Activated T-helper 1 cell treated with anti-CD3 and anti-CD28 coated beads, Interleukin-12 subunit alpha, Interleukin-12 subunit beta, Interleukin-2, Interleukin-4 antibody, amounts not matched to agents 30 ng/mL and 10 ng/mL and 1 ng/mL, durations not matched to agents 14 hours and 24 hours and 36 hours (primary cell): ENCODE measurements at regions of chr1 and their contacts with region 1.

Region 1: DNA sequence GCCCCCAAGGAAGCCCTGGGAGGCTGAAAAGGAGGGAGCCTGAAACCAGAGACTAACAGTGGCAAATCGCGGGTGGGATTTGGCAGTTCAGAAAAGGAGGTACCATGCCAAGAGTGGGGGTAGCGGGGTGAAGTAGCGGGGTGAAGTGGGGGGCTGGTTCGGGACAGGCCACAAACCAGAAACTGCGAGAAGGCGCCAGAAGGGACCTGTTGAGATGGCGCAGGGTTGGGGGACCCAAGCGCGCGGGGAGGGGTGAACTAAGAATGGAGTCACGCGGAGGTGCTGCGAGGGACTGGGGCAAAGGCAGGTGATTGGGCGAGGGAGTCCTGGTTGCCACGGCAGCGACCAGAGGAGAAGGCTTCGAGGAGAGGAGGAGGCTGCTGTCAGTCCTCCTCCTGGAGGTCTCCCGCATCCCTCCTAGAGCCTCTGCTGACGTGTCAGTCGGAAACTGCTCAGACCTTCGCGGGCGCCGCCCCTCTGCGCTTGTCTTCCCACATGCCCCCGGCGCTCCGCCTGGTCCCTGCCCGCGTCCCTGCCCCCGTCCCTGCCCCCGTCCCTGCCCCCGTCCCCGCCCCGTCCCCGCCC is 438 bp upstream of the MIA3 start:
- DNase-seq: peak; percentile 86
- H3K4me3 Mint-ChIP-seq: peak overlapping the region; percentile 82
- H3K27ac Mint-ChIP-seq: peak overlapping the region; percentile 92
- H3K4me1 Mint-ChIP-seq: peaks cover 34% of the 10 kb centered on the region
- H3K27me3 Mint-ChIP-seq: peaks cover 26% of the 10 kb centered on the region

Region 2: DNA sequence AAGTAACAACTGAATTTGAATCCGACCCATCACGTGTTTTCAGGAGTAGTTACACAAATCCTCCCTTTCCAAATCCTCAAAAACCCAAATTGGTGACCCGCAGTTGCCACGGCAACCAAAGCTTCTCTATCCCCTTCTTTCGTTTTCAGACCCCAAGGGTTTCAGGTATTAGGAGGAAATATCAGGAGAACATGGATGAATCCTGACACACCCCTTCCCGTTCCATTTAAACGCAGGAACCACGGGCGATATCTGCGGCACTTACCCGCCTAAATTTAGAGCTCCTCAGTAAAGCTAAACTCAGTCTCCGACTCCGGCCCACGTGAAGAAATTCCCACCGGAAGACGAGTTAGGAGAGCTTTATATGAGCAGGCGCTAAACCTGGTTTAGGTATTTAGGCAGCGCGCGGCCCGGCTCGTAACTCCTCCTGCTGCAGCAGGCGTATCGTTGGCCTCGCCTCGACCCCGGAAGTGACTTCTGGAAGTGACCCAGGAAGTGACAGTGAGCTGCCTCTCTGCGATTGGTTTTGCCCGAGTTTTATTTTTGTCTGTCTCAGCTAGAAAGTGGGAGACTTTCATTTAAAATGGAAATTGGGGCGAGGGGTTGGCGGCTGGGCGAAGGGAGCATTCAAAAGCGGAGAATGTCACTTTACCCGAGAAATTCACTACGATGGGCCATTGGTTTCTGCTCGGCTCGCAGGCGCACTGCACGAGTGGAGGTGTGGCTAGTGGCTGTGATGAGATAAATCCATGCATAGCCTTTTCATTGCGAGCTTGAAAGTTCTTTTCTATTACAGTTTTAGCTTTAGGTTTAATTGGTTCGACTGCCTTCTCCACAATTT is 27.8 kb before region 1 on chr1 and contains the start of gene TAF1A:
- intact Hi-C with region 1: loop called (anchors 1 kb)
- DNase-seq: peak; percentile 77
- H3K4me3 Mint-ChIP-seq: peak within 1 kb of the TSS; percentile 92
- H3K27ac Mint-ChIP-seq: peak within 1 kb of the TSS; percentile 88
- H3K4me1 Mint-ChIP-seq: peaks cover 37% of the 10 kb centered on the region
- H3K27me3 Mint-ChIP-seq: peaks cover 6% of the 10 kb centered on the region
- total RNA-seq, gene TAF1A: 19.2 and 19.7 TPM in 2 replicates

Region 3: GRCh38 chr1:222634180-222635013 is 16.9 kb after region 1 on chr1:
- intact Hi-C with region 1: loop called (anchors 1 kb)
- DNase-seq: peak; percentile 59
- H3K4me3 Mint-ChIP-seq: no peak overlapping the region
- H3K27ac Mint-ChIP-seq: no peak overlapping the region
- H3K4me1 Mint-ChIP-seq: peaks cover 14% of the 10 kb centered on the region
- H3K27me3 Mint-ChIP-seq: no peaks in the 10 kb centered on the region

Region 4: GRCh38 chr1:222643938-222644635 is 26.6 kb after region 1 on chr1:
- intact Hi-C with region 1: loop called (anchors 1 kb)
- DNase-seq: peak; percentile 98
- H3K4me3 Mint-ChIP-seq: peak overlapping the region; percentile 99
- H3K27ac Mint-ChIP-seq: peak overlapping the region; percentile 97
- H3K4me1 Mint-ChIP-seq: peaks cover 33% of the 10 kb centered on the region
- H3K27me3 Mint-ChIP-seq: no peaks in the 10 kb centered on the region

Region 5: GRCh38 chr1:222713091-222713961 is 95.9 kb after region 1 on chr1:
- intact Hi-C with region 1: loop called (anchors 1 kb)
- DNase-seq: peak; percentile 85
- H3K4me3 Mint-ChIP-seq: peak overlapping the region; percentile 94
- H3K27ac Mint-ChIP-seq: peak overlapping the region; percentile 99
- H3K4me1 Mint-ChIP-seq: peaks cover 57% of the 10 kb centered on the region
- H3K27me3 Mint-ChIP-seq: no peaks in the 10 kb centered on the region

Region 6: DNA sequence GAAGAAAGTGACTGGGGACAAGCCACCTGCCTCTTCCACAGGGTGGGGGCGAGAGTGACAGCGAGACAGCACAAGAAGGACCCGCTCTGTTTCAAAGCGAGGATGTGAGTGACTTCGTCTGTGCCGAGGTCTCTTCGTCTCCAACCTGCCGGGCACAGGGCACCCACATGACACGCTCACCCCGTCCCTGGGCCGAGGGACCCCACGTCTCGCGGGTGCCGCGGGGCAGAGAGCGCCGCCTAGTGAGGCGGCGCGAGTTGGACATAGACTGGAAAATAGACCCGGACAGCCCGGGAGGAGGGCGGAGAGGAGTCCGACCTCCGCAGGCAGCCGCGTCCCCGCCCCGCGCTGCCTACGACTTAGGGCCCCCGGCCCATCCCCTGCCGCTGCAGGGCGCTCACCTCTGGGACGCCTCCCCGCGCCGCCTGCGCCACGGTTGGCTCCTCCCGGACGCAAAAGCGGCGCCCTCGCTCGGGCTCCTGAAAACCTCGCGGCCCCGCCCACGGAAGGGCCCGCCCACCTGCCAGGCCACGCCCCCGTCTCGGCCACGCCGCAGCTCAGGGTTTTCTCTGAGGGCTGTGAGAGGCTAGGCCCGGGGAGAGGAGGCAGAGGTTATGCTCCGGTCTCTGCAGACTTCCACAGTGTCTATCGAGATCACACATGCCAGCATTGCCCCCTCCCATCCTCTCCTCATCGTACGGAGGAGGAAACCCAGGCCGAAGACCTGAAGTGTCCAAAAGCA is 525.5 kb after region 1 on chr1 and contains the start of gene TLR5:
- intact Hi-C with region 1: loop called (anchors 5 kb)
- DNase-seq: peak; percentile 82
- H3K4me3 Mint-ChIP-seq: peak within 1 kb of the TSS; percentile 68
- H3K27ac Mint-ChIP-seq: peak within 1 kb of the TSS; percentile 18
- H3K4me1 Mint-ChIP-seq: peaks cover 7% of the 10 kb centered on the region
- H3K27me3 Mint-ChIP-seq: peaks cover 11% of the 10 kb centered on the region
- total RNA-seq, gene TLR5: not detected in 2 replicates

Region 7: GRCh38 chr1:223401873-223402789 is 784.7 kb after region 1 on chr1:
- intact Hi-C with region 1: no loop called
- DNase-seq: no peak
- H3K4me3 Mint-ChIP-seq: no peak overlapping the region
- H3K27ac Mint-ChIP-seq: no peak overlapping the region
- H3K4me1 Mint-ChIP-seq: no peaks in the 10 kb centered on the region
- H3K27me3 Mint-ChIP-seq: no peaks in the 10 kb centered on the region